ENCODE measurements at regions of chr13 and their contacts with region 1.

Region 1: DNA sequence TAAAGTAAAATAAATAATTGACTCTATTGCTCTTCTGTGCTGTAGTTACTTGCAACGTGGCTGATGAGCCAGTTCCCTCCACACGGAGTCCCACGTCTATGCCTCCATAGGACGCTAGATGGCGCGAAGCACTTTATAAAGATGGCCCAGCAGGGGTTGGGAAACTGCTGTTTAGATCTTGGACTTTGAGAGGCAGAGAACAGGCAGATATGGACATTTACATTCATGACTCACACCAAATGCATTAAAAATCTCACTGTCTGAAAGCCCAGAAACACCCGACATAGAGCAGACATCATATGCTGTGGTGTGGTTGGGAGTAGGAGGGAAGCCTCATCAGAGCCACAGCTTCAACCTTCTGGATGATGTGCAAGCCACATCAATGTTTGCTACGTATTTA is 643.1 kb upstream of the ARGLU1 start:
- DNase-seq: peak; percentile 71
- ATAC-seq: peak; percentile 85 to 94

Region 2: DNA sequence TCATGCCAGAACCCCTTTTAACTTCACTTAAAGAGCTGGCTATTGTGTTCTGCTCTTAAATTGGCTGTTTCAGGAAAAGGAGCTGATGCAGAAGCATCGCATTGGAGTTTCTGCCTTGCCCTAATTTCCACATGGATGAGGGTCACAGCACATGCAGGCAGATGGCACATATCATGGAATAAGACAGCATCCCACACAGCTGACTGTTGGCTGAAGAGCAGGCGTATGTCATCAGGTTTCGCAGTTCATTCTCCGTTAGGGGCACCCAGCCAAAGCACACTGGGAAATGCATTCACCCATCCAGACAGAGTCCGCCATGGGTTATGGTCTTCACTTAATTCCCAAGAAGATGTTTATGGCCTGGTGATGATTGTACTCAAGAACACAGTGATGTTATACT is 431.8 kb after region 1 on chr13:
- intact Hi-C with region 1: loop called in 1 of 2 experiments (anchors 10 kb)
- DNase-seq: no peak
- ATAC-seq: no peak

Region 3: DNA sequence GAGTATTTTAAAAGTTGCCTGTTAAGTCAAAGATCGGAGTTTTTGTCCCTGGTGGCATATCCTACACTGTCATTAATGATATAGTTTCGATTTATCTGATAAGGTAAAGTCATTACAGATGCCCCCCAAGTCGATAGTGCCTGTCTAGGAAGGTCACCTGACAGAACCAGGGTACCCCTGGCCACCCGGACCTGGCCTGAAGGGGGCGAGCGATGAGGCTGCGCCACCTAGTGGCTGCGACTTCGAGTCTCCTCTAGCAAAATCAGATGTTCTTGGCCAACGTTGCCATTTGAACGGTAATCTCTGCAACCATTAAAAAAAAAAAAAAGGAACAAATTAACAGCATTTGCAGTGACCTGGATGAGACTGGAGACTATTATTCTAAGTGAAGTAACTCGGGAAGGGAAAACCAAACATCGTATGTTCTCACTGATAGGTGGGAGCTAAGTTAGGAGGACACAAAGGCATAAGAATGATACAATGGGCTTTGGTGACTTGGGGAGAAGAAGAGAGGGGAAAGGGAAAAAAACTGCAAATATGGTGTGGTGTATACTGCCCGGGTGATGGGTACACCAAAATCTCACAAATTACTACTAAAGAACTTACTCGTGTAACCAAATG is 439.1 kb after region 1 on chr13:
- intact Hi-C with region 1: loop called (anchors 5 to 10 kb)
- DNase-seq: peak; percentile 52
- ATAC-seq: peak in 1 of 2 donors; percentile 38

Region 4: DNA sequence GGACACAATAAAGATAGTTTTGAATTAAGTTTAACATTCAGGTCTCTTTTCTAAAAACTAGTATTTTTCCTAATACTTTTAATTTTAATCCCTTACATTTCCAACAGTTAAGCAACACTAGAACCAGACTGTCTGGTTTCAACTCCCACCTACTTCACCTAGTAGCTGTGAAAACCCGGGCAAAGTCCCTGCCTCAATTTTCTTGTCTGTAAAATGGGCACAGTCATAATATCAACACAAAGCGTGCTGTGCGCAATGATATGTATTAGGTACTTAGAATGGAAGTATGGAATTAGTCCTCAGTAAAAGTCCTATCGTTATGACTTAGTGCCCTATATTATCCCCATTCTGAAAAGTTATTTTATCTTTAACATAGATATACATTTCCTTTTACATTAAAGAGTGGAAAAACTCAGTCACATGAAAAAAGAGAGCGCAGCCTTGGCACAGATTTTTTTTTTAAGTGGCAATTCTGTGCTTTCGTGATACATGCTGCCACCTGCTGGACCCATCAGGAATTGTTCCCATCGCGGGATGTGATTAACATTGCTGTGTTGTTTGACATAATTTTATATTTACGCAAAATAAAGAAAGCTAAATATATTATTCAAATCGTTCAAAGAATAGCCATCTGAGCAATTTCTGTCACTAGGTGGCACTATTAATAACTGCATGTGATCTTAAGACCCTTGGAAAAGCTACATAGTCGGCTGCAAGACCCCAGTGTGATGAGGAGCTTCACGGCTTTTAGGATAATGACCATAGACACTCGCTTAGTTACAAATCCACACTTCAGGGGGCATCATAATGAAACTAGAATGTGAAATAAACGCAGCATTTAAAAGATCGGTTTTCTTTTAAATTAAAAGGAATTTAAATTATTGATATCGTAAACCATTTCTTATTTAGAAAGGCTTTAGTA is 944.4 kb after region 1 on chr13:
- intact Hi-C with region 1: loop called (anchors 2 to 5 kb)
- DNase-seq: peak; percentile 38
- ATAC-seq: peak in 1 of 2 donors; percentile 54

Measured in left cardiac atrium (tissue), 4 donors.